ENCODE measurements at regions of chr3 and their contacts with region 1.

Region 1: DNA sequence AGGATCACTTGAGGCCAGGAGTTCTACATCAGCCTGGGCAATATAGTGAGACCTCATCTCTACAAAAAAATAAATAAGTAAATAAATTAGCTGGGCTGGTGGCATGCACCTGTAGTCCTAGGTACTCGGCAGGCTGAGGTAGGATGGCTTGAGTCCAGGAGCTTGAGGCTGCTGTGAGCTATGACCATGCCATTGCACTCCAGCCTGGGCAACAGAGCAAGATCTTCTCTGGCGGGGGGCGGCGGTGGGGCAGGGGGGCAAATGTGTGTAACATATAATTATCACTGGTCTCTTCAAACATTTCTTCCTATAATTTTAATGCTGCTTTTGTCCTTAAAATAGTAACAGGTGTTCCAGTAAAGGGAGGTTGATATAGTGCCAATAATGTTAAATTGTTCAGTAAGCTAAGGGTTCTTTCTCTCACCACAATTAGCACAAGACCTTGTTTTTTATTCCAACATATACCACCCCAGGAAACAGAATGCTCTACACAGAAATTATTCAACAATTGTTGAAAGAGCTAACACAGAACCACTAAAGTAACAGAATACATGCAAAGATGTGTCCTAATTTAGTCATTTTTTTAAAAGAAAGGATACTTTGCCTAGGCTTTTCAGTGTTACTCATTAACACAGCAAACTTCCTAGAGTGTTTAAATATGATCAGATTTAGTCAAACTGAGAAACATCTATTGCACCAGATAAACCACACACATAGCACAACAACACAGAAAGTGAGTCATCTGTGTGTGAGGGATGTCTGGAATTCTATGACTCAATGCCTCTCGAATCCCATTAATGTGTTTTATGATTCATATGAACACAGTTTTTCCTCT is 29.1 kb downstream of the ANKRD28 start:
- DNase-seq: peak; percentile 26
- CTCF ChIP-seq: no peak

Region 2: GRCh38 chr3:15728766-15729165 is 39.9 kb before region 1 on chr3:
- CTCF ChIA-PET with region 1: no interaction called
- POLR2A ChIA-PET with region 1: interaction called, 11 read pairs
- DNase-seq: no peak
- CTCF ChIP-seq: no peak

Region 3: GRCh38 chr3:15755181-15755580 is 13.5 kb before region 1 on chr3:
- CTCF ChIA-PET with region 1: interaction called, 12 read pairs
- POLR2A ChIA-PET with region 1: no interaction called
- DNase-seq: no peak
- CTCF ChIP-seq: no peak

Region 4: DNA sequence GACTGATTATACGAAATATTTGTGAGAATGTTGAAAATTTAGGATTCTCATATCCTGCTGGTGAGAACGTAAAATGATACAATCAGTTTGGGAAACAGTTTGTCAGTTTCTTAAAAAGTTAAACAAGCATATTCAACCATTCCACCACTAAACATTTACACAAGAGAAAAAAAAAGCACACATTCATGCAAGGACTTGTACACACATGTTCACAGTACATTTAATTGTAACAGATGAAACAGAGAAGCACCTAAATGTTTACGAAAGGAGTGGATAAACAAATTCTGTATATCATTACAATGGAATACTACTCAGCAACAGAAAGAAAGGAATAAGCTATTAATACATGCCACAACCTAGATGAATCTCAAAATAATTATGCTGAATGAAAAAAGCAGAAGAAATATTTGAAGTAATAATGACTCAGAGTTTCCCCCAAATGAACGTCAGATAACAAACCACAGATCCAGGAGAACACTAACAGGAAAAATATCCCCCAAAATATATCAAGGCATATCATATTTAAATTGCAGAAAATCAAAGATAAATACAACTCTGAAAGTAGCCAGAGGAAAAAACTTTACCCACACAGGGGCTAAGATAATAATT is 14.8 kb after region 1 on chr3:
- CTCF ChIA-PET with region 1: no interaction called
- POLR2A ChIA-PET with region 1: no interaction called
- DNase-seq: no peak
- CTCF ChIP-seq: no peak

Region 5: GRCh38 chr3:16290007-16290826 is 521.6 kb after region 1 on chr3:
- CTCF ChIA-PET with region 1: no interaction called
- POLR2A ChIA-PET with region 1: no interaction called
- DNase-seq: peak; percentile 39
- CTCF ChIP-seq: peak; percentile 88

Measured in GM10248 (cell line).